IMR-90 (cell line): ENCODE measurements at regions of chr2 and their contacts with region 1.

Region 1: DNA sequence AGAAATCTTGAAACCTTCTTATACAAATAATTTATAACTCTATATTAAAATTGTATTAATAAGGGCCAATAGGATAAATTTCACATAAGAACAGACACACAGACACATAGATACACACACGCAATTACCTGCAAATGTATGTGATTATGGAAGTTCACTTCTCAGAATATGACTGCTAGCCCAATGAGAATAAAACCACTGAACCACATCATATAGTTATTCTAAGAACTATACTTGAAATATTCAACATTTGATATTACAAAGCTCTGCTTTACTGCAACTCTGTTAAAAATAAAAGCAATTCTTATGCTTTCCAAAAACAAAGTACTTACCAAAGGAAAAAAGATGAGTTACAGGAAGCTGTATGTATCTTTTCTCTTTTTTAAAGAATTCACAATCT is 51.1 kb downstream of the PGAP1 start:
- DNase-seq: no peak
- ATAC-seq: no peak
- H3K4me3 ChIP-seq: no peak overlapping the region
- H3K27ac ChIP-seq: no peak overlapping the region
- H3K4me1 ChIP-seq: no peaks in the 10 kb centered on the region
- H3K27me3 ChIP-seq: no peaks in the 10 kb centered on the region
- CTCF ChIP-seq: no peak
- POLR2A ChIP-seq: no peak
- RAD21 ChIP-seq: no peak

Region 2: GRCh38 chr2:195861821-195862220 is 1013.6 kb before region 1 on chr2:
- CTCF ChIA-PET with region 1: no interaction called
- POLR2A ChIA-PET with region 1: no interaction called
- dilution Hi-C with region 1: no loop called
- in situ Hi-C with region 1: no loop called
- intact Hi-C with region 1: no loop called
- DNase-seq: peak; percentile 79
- ATAC-seq: peak; percentile 85
- H3K4me3 ChIP-seq: no peak overlapping the region
- H3K27ac ChIP-seq: no peak overlapping the region
- H3K4me1 ChIP-seq: peaks cover 1% of the 10 kb centered on the region; the same call in 1 of the 2 replicates
- H3K27me3 ChIP-seq: no peaks in the 10 kb centered on the region
- CTCF ChIP-seq: no peak
- POLR2A ChIP-seq: no peak
- RAD21 ChIP-seq: no peak

Region 3: GRCh38 chr2:197248623-197249022 is 373.2 kb after region 1 on chr2:
- CTCF ChIA-PET with region 1: no interaction called
- POLR2A ChIA-PET with region 1: no interaction called
- dilution Hi-C with region 1: no loop called
- in situ Hi-C with region 1: no loop called
- intact Hi-C with region 1: no loop called
- DNase-seq: peak; percentile 20
- ATAC-seq: no peak
- H3K4me3 ChIP-seq: no peak overlapping the region
- H3K27ac ChIP-seq: no peak overlapping the region
- H3K4me1 ChIP-seq: peaks cover 2% of the 10 kb centered on the region; the same call in 1 of the 2 replicates
- H3K27me3 ChIP-seq: no peaks in the 10 kb centered on the region
- CTCF ChIP-seq: no peak
- POLR2A ChIP-seq: no peak
- RAD21 ChIP-seq: no peak

Region 4: GRCh38 chr2:197560146-197560665 is 684.8 kb after region 1 on chr2:
- CTCF ChIA-PET with region 1: no interaction called
- POLR2A ChIA-PET with region 1: interaction called, 13 read pairs
- dilution Hi-C with region 1: no loop called
- in situ Hi-C with region 1: no loop called
- intact Hi-C with region 1: no loop called
- DNase-seq: no peak
- ATAC-seq: no peak
- H3K4me3 ChIP-seq: no peak overlapping the region
- H3K27ac ChIP-seq: no peak overlapping the region
- H3K4me1 ChIP-seq: no peaks in the 10 kb centered on the region
- H3K27me3 ChIP-seq: no peaks in the 10 kb centered on the region
- CTCF ChIP-seq: no peak
- POLR2A ChIP-seq: no peak
- RAD21 ChIP-seq: no peak